ENCODE measurements at regions of chr1 and their contacts with region 1.

Region 1: GRCh38 chr1:29033829-29034466 is 89.8 kb downstream of the TMEM200B start:
- DNase-seq: no peak
- ATAC-seq: peak; percentile 53
- H3K4me3 Mint-ChIP-seq: no peak overlapping the region
- H3K27ac Mint-ChIP-seq: no peak overlapping the region
- H3K4me1 Mint-ChIP-seq: no peaks in the 10 kb centered on the region
- H3K27me3 Mint-ChIP-seq: no peaks in the 10 kb centered on the region

Region 2: DNA sequence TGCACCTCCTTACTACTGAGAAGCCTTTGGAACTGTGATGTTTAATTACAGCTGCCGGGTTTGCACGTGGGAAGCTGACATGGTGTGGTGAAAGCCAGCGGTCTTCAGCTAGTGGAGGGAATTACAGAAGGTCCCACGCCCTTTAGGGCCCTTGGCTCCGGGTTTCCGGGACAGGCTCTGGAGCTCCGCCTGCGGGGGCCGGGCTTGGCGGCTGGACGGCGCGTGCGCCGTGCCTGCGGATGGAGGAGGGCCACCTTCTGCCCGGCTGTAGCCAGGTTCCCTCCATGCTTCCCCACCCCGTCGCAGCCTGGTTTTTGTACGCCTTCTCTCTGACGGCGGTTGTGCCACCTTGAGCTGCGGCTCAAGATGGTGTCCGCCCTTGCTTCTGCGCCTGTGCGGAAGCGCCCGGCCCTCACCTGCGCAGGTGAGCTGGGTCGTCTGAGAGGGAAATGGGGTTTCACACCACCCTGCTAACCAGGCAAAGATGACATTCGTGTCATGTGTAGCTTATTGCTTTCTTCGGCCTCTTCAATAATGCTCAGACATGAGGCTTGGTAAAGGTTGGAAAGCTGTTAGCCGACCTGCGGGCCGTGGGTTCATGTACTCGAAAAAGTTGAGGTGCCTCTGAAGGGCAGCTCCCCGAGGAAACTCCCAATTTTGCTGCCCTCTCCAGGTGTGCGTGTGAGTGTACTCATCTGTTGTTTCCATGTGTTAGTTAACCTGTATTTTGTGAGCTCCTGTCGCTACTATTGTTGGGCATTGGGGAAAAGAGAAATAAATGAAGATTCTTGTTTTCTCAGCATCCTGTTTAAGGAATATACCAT is 258.6 kb before region 1 on chr1:
- CTCF ChIA-PET with region 1: no interaction called
- POLR2A ChIA-PET with region 1: no interaction called
- intact Hi-C with region 1: loop called in 1 of 2 experiments (anchors 5 kb)
- DNase-seq: peak; percentile 76
- ATAC-seq: peak; percentile 89
- H3K4me3 Mint-ChIP-seq: peak overlapping the region; percentile 44
- H3K27ac Mint-ChIP-seq: peak overlapping the region; percentile 6
- H3K4me1 Mint-ChIP-seq: peaks cover 8% of the 10 kb centered on the region
- H3K27me3 Mint-ChIP-seq: no peaks in the 10 kb centered on the region

Region 3: GRCh38 chr1:28914228-28915030 is 119.5 kb before region 1 on chr1 and contains the start of gene EPB41:
- CTCF ChIA-PET with region 1: interaction called, 13 read pairs
- POLR2A ChIA-PET with region 1: interaction called, 3 read pairs
- intact Hi-C with region 1: no loop called
- DNase-seq: peak; percentile 94
- ATAC-seq: peak; percentile 84
- H3K4me3 Mint-ChIP-seq: peak within 1 kb of the TSS; percentile 86
- H3K27ac Mint-ChIP-seq: peak within 1 kb of the TSS; percentile 93
- H3K4me1 Mint-ChIP-seq: peaks cover 47% of the 10 kb centered on the region
- H3K27me3 Mint-ChIP-seq: no peaks in the 10 kb centered on the region
- total RNA-seq, gene EPB41: 75.5 to 130 TPM

Region 4: GRCh38 chr1:29017975-29018712 is 15.8 kb before region 1 on chr1:
- CTCF ChIA-PET with region 1: interaction called, 30 read pairs
- POLR2A ChIA-PET with region 1: no interaction called
- intact Hi-C with region 1: no loop called
- DNase-seq: no peak
- ATAC-seq: no peak
- H3K4me3 Mint-ChIP-seq: no peak overlapping the region
- H3K27ac Mint-ChIP-seq: no peak overlapping the region
- H3K4me1 Mint-ChIP-seq: no peaks in the 10 kb centered on the region
- H3K27me3 Mint-ChIP-seq: no peaks in the 10 kb centered on the region

Region 5: DNA sequence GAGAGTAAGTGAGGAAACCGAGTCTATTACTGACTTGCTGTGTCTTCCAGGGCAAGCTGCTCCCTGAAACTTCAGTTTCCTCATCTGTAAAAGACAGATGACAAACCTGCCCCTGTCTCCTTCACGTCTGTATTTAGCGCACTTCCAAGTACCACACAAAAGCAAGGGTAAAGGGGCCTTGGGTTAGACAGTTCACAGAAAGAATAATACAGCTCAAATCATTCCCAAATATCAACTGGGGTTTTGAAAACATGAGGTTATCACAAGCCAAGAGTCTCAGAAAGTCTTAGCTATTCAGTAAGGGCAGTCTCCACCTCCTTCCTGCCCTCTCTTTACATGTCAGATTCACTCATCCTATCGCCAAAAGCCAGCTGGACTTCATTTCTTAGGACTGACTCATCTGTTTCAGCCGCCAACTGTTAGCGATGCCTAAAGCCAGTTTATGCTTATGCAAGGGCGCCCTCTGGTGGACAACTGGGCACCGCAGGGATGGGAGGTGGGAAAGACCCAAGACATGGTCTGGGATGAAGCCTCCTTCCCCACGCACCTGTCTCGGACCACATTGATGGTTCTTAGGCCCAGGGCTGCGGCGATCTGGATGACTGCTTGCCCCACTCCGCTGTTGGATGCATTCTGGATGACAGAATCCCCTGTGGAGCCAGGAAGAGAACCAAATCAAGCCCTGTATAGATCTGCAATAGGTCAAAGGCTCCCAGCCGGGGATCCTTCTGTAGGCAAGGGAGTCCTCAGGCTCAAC is 168.8 kb after region 1 on chr1:
- CTCF ChIA-PET with region 1: interaction called, 26 read pairs
- POLR2A ChIA-PET with region 1: no interaction called
- intact Hi-C with region 1: loop called in 1 of 2 experiments (anchors 2 kb)
- DNase-seq: peak; percentile 96
- ATAC-seq: peak; percentile 95
- H3K4me3 Mint-ChIP-seq: no peak overlapping the region
- H3K27ac Mint-ChIP-seq: no peak overlapping the region
- H3K4me1 Mint-ChIP-seq: peaks cover 6% of the 10 kb centered on the region
- H3K27me3 Mint-ChIP-seq: no peaks in the 10 kb centered on the region

Region 6: DNA sequence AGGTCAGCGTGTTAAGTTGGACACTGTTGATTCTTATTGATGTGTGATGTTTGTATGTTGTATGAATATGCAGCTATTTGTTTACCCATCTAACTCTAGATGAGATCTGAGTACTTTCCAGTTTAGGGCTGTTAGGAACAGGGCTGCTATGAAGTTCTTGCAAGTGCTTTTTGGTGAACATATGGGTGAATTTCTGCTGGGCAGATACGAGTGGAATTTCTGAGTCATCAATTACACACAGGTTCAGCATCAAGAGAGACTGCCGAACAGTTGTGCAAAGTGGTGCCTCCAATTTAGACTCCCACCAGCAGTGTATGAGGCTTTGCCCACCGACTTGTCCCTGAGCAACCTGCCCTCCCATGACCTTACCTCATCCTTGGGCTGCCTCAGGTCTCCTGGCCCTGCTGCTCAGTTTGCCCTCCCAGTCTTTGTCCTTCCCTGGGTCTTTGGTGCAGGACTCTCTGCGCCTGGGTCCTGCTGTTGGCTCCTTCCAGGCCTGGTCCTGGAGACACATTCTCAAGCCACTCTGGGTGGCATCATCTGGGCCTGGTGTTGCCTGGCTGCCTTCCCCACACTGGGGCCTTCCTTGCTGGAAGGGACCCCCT is 546.0 kb after region 1 on chr1:
- CTCF ChIA-PET with region 1: no interaction called
- POLR2A ChIA-PET with region 1: no interaction called
- intact Hi-C with region 1: no loop called
- DNase-seq: no peak
- ATAC-seq: no peak
- H3K4me3 Mint-ChIP-seq: no peak overlapping the region
- H3K27ac Mint-ChIP-seq: no peak overlapping the region
- H3K4me1 Mint-ChIP-seq: no peaks in the 10 kb centered on the region
- H3K27me3 Mint-ChIP-seq: peaks cover 3% of the 10 kb centered on the region

Measured in activated CD4-positive, alpha-beta T cell treated with anti-CD3 and anti-CD28 coated beads for 36 hours (primary cell).